GM18951 (cell line): ENCODE measurements at regions of chr9 and their contacts with region 1.

Region 1: DNA sequence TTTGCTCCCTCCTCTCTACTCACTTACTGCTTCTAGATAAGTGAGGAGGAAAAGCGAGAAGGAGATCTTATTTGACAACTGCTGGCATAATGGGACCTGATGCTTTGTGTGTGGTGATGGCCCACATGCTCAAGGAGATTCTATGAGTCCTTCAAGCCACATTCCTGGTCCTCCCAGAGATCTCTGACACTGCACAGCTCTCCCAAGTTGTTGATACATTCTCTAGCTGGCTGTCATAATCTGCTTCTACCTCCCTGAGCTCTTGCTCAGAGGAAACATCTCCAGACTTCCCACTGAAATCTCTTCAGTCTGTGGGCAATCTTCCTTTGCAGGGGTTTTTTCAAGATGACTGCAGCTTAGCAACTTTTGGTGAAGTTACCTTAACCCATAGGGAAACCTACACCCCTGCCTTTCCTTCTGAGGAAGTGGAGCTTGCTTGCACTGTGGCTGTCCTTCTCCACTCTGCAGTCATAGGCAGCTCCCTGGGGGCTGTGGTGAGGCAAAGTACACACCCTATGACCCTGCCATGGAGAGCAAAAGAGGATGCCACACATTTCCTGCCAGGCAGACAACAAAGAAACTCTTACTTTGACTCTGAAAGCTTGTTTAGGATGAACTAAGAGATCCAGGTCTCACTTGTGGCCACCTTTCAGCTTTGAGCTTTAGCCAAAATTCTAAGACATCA is 163.8 kb downstream of the TMEM38B start:
- POLR2A ChIP-seq: no peak

Region 2: DNA sequence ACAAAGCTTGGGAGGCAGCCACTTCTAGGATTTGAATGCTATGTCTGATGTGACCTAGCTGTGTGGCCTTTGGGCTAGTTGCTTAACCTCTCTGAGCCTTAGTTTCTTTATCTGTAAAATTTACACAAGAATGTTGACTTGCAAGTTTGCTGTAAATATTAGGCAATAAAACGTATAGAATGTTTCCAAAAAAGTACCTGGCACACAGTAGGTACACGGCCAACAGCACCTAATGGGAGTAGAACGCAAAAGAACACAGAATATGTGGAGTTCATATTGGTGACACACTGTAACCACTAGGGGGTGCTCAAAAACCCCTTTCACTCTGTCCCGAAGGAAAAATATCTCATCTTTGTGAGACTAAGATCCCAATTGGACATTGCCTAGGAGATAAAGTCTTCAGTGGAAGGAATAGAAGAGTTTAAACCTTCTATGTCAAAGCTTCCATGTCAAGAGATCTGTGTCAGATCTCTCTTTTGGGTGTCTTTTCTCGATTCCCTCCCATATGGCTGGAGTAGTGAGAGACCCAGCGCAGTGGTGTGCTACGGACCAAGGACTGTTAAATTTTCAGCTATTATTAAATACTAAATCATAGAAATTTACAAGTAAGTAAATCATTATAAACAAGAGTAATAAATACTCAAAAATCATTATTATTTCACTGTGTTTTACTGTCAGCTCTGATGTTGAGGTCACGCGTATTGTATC is 1279.5 kb after region 1 on chr9:
- in situ Hi-C with region 1: loop called (anchors 25 kb)
- POLR2A ChIP-seq: no peak